Right ventricle myocardium superior (tissue), 1 donor: ENCODE measurements at regions of chr14 and their contacts with region 1.

Region 1: DNA sequence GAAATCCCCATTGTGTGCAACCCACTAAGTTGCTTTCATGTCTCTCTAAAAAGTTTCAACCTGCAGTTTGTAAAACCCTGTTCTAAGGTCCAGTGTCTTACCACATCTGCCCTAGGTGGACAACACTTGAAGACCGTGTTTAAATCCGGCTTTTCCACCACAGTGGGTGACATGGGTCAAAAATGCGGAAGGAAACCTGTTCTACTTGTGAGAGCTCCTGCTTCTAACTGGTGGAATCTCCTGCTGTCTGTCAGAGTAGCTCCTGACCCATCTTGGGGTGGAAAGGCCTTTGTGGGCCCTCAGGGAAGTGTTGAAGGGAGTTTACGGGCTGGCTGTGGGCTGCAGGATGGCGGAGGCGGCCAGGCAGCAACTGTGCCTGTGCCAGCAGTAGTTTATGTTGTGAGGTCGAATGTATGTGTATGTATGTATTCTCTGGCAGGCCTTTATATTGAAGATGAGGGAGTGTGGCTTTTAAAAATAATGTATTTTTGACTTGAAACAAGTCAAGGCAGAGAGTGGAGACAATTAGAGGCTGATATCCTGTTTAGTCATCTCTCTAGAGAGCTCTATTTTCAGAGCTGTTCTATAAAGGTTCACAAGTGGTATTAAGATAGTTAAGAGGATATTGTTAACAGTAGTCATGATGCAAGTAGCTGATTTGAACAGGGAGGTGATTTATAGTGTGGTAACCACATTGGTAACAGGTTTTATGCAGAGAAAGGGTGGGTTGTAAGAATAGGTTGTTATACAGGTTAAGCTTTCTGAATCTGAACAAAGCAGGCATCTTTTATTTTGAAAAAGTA is 67.0 kb downstream of the PRKCH start:
- DNase-seq: no peak
- ATAC-seq: no peak

Region 2: GRCh38 chr14:61438860-61439684 is 50.7 kb after region 1 on chr14:
- intact Hi-C with region 1: loop called (anchors 10 kb)
- DNase-seq: peak; percentile 59
- ATAC-seq: peak; percentile 84

Region 3: GRCh38 chr14:61503167-61503801 is 114.9 kb after region 1 on chr14:
- intact Hi-C with region 1: no loop called
- DNase-seq: no peak
- ATAC-seq: no peak